ENCODE measurements at regions of chr4 and their contacts with region 1.

Region 1: GRCh38 chr4:37934096-37934495 is 26.1 kb upstream of the PTTG2 start:
- DNase-seq: no peak
- ATAC-seq: no peak
- H3K4me3 ChIP-seq: no peak overlapping the region
- H3K27ac ChIP-seq: no peak overlapping the region
- H3K4me1 ChIP-seq: peaks cover 0 to 44% (median 22%) of the 10 kb centered on the region in 12 donors
- H3K27me3 ChIP-seq: no peaks in the 10 kb centered on the region
- CTCF ChIP-seq: no peak
- POLR2A ChIP-seq: no peak

Region 2: GRCh38 chr4:37389967-37390580 is 544.0 kb before region 1 on chr4:
- intact Hi-C with region 1: no loop called
- DNase-seq: no peak
- ATAC-seq: no peak
- H3K4me3 ChIP-seq: no peak overlapping the region
- H3K27ac ChIP-seq: no peak overlapping the region
- H3K4me1 ChIP-seq: peaks cover 0 to 28% (median 3%) of the 10 kb centered on the region in 12 donors
- H3K27me3 ChIP-seq: peaks cover 0 to 7% (median 0%) of the 10 kb centered on the region in 9 donors
- CTCF ChIP-seq: peak; percentile 66 to 82 (median 74)
- POLR2A ChIP-seq: no peak

Region 3: GRCh38 chr4:37970487-37971101 is 36.5 kb after region 1 on chr4:
- intact Hi-C with region 1: loop called in 1 of 10 experiments (anchors 5 kb)
- DNase-seq: peak; percentile 76 to 87 (median 85)
- ATAC-seq: peak; percentile 80 to 95 (median 94)
- H3K4me3 ChIP-seq: no peak overlapping the region
- H3K27ac ChIP-seq: peak overlapping the region in 11 of 12 donors; percentile 42 to 83 (median 72)
- H3K4me1 ChIP-seq: peaks cover 0 to 47% (median 21%) of the 10 kb centered on the region in 12 donors
- H3K27me3 ChIP-seq: no peaks in the 10 kb centered on the region
- CTCF ChIP-seq: peak; percentile 52 to 75 (median 62)
- POLR2A ChIP-seq: no peak